Calu3 (cell line): ENCODE measurements at regions of chr3 and their contacts with region 1.

Region 1: GRCh38 chr3:27943106-27943505 is 221.0 kb upstream of the EOMES start:
- DNase-seq: peak; percentile 19
- H3K4me3 Mint-ChIP-seq: no peak overlapping the region
- H3K27ac Mint-ChIP-seq: no peak overlapping the region
- H3K4me1 Mint-ChIP-seq: no peaks in the 10 kb centered on the region
- H3K27me3 Mint-ChIP-seq: no peaks in the 10 kb centered on the region
- CTCF ChIP-seq: no peak

Region 2: DNA sequence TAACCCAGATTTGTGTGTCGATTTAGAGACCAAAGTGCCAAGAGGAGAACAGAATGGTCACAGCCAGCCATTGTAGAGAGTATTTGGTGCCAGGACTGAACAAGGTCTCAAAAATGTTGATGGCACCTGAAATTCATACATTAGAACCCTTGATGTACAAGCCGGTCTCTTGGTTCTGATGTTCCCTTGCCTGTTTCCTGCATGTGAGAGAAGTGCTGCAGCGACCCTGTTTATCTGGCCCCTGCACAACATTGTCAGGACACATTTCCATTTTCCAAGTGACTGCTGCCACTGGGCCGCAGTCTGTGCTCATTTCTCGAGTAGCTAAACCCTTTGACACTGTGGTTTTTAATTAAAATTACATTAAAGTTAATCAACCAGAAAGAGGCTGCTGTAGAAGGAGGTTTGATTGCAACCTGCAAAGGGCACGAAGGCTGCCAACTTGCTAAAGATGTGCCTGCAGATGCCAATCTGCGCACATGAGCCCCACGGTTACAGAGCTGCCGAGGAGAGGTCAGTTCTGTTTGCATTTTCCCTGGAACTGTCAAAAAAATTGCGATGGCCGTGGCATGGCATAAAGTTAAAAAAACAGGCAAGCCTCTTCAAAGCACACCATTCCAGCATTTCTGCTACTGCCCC is 161.9 kb after region 1 on chr3:
- CTCF ChIA-PET with region 1: no interaction called
- intact Hi-C with region 1: no loop called
- DNase-seq: no peak
- H3K4me3 Mint-ChIP-seq: no peak overlapping the region
- H3K27ac Mint-ChIP-seq: no peak overlapping the region
- H3K4me1 Mint-ChIP-seq: no peaks in the 10 kb centered on the region
- H3K27me3 Mint-ChIP-seq: no peaks in the 10 kb centered on the region
- CTCF ChIP-seq: no peak

Region 3: GRCh38 chr3:28286595-28286994 is 343.5 kb after region 1 on chr3:
- CTCF ChIA-PET with region 1: no interaction called
- intact Hi-C with region 1: loop called (anchors 10 kb)
- DNase-seq: no peak
- H3K4me3 Mint-ChIP-seq: no peak overlapping the region
- H3K27ac Mint-ChIP-seq: no peak overlapping the region
- H3K4me1 Mint-ChIP-seq: no peaks in the 10 kb centered on the region
- H3K27me3 Mint-ChIP-seq: no peaks in the 10 kb centered on the region
- CTCF ChIP-seq: no peak